AG04450 (cell line): ENCODE measurements at regions of chr11 and their contacts with region 1.

Region 1: GRCh38 chr11:33161120-33162005 is at the start of gene CSTF3:
- DNase-seq: peak; percentile 96
- H3K4me3 ChIP-seq: peak within 1 kb of the TSS; percentile 90
- H3K27ac ChIP-seq: peak within 1 kb of the TSS; percentile 81
- H3K27me3 ChIP-seq: no peaks in the 10 kb centered on the region
- CTCF ChIP-seq: peak; percentile 54
- polyA plus RNA-seq, gene CSTF3: 29.9 and 38.6 TPM in 2 replicates

Region 2: DNA sequence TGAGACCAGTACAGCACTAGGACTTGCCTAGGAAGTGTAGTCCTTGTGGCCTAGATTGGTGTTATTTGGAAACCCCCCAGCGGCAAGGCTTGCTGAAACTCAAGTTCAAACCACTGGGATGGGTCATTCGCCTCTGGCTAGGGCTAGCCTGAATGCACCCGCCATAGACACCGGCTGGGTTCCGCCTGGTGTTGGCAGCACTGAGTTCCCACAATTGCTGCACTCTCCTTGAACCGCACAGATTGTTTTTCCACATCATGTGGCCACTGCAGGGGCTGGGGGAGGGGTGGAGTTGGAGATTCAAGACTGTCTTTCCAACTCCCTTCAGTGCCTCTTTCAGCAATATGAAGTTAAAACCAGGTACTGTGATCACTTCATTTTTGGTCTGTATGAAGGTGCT is 410.0 kb before region 1 on chr11:
- CTCF ChIA-PET with region 1: no interaction called
- POLR2A ChIA-PET with region 1: no interaction called
- DNase-seq: no peak
- H3K4me3 ChIP-seq: no peak overlapping the region
- H3K27ac ChIP-seq: no peak overlapping the region
- H3K27me3 ChIP-seq: no peaks in the 10 kb centered on the region
- CTCF ChIP-seq: no peak

Region 3: DNA sequence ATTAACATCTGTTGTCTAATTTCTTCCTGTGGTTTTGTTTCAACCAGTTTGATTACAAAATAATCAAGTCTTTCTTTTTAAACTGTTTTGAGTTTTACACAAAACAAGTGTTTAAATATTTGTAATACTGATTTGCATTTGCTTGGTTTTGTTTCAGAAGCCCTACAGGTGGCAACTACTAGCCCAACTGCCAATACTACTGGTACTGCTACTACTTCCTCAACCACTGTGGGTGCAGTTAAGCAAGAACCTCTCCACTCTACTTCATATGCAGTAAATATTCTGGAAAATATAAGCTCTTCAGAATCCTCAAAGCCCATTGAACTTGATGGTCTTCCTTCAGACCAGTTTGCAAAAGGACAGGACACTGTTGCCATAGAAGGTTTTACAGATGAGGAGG is 207.7 kb before region 1 on chr11:
- CTCF ChIA-PET with region 1: no interaction called
- POLR2A ChIA-PET with region 1: no interaction called
- DNase-seq: no peak
- H3K4me3 ChIP-seq: no peak overlapping the region
- H3K27ac ChIP-seq: no peak overlapping the region
- H3K27me3 ChIP-seq: no peaks in the 10 kb centered on the region
- CTCF ChIP-seq: no peak

Region 4: DNA sequence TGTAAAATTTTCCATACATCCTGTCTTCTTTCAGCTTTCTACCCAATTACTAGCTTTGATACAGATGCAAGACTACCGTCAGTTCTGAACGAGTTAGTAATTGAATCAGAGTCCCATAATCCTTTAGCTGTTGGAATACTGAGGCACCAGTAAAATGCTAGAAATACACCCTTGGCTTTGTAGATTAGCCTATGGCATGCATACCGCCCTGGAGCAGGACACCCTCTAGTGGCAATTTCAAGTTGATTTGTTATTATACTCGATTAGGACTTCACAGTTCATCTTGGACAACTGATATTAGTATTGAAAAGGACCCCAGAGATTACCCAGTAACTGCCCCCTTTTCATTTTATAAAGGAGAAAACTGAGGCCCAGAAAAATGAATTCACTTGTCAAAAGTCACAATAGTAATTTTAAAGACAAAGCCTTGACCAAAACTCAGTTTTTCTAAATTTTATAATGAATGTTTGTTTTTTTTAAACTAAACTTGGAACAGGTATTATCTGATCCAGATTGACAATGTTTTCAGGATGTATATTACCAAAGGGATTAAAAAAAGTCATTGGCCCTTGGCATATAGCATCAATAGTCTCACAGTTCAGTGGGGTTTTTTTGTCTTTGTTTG is 168.5 kb after region 1 on chr11:
- CTCF ChIA-PET with region 1: interaction called, 78 read pairs
- POLR2A ChIA-PET with region 1: no interaction called
- DNase-seq: peak; percentile 27
- H3K4me3 ChIP-seq: no peak overlapping the region
- H3K27ac ChIP-seq: no peak overlapping the region
- H3K27me3 ChIP-seq: no peaks in the 10 kb centered on the region
- CTCF ChIP-seq: peak; percentile 72